ENCODE measurements at regions of chr12 and their contacts with region 1.

Region 1: GRCh38 chr12:55940065-55940732 is 9.2 kb downstream of the DGKA start:
- DNase-seq: peak; percentile 63 to 92 (median 82)
- ATAC-seq: peak; percentile 92
- H3K4me3 Mint-ChIP-seq: peak overlapping the region; percentile 47 to 98 (median 66)
- H3K27ac Mint-ChIP-seq: peak overlapping the region; percentile 79 to 99 (median 95)
- H3K4me1 Mint-ChIP-seq: peaks cover 56 to 97% (median 81%) of the 10 kb centered on the region in 4 donors
- H3K27me3 Mint-ChIP-seq: no peaks in the 10 kb centered on the region

Region 2: DNA sequence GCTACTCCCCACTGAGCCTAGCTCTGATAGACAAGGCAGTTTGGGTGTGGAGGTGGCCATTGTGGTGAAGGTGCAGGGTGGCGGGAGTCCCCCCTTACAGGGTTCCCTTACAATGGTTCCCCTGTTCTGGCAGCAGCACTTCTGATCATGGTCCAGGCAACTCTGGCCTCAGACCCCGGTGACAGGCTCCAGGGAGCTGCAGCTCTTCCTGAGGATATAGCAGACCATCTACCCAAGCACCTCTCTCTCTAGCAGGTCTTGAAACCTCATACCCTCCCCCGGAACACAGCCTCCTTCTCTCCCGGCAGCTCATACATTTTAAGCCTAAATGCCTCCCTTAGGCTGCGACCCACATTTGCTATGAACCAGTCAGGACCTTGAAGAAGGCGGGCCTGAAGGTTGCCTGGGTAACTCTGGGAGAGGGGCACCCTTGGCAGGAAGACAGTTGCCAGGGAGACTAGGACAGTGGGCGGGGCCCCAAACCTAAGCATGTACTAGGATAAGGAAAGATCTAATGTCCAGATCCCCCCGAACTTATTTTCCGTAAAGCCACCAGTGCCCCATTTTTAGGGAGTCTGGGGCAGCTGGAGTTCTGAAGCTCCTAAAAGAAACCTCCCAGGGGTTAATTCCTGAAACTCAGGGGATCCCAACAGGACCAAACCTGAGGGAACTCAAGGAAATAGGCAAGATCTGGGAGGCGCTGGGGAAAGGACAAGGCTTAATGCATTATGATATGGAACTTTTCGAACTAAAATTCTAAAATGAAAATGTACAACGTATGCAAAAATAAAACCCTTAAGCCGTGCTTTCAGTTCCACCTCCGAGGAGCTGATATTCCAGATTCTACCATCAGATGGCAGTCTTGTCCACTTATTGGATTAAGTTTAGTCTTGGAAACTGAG is 201.8 kb before region 1 on chr12:
- POLR2A ChIA-PET with region 1: interaction called, 11 read pairs
- DNase-seq: peak; percentile 48 to 91 (median 80)
- ATAC-seq: peak; percentile 65 to 80
- H3K4me3 Mint-ChIP-seq: peak overlapping the region; percentile 82 to 95 (median 93)
- H3K27ac Mint-ChIP-seq: peak overlapping the region; percentile 77 to 98 (median 95)
- H3K4me1 Mint-ChIP-seq: peaks cover 16 to 32% (median 26%) of the 10 kb centered on the region in 4 donors
- H3K27me3 Mint-ChIP-seq: no peaks in the 10 kb centered on the region

Region 3: GRCh38 chr12:55817346-55818139 is 122.7 kb before region 1 on chr12 and contains the starts of genes ORMDL2 and SARNP:
- POLR2A ChIA-PET with region 1: interaction called, 62 read pairs
- DNase-seq: peak; percentile 85 to 99 (median 98)
- ATAC-seq: peak; percentile 92 to 93
- H3K4me3 Mint-ChIP-seq: peak within 1 kb of the TSS in 1 of 10 donors; percentile 77
- H3K27ac Mint-ChIP-seq: no peak within 1 kb of the TSS
- H3K4me1 Mint-ChIP-seq: peaks cover 10 to 51% (median 41%) of the 10 kb centered on the region in 4 donors
- H3K27me3 Mint-ChIP-seq: no peaks in the 10 kb centered on the region
- polyA plus RNA-seq, gene ORMDL2: 71.6 to 92.5 (median 90.3) TPM
- polyA plus RNA-seq, gene SARNP: 93.6 to 104 (median 94.0) TPM

Region 4: DNA sequence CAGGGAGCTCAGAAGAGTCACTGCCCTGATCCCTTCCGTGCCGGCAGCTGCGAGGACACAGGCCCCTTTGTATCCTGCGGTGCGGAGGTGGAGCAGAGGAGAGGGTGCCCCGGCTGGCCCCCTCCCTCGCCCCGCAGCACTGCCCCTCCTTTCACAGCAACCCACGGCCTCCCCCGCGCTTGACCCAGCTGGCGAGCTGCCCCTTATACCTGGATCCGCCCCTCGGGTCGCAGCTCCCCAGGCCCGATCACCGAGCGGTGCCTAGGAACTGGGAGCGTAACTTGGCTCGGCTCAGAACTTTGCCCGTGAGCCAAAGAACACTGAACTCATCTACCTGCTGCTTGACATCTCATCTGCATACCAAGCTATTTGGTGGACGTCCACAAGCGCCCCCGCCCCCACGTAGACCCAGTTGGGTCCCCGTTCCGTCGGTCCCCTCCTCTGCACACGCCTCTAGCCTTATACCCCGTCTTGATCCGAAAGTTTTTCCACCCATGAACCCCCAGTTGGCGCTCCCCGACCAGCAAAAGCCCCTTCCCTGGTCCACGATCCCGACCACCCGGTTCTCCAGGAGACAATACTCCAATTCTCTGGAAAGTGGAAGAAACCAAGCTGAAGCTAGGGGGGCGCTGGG is 110.1 kb before region 1 on chr12:
- POLR2A ChIA-PET with region 1: interaction called, 95 read pairs
- DNase-seq: peak; percentile 15 to 71 (median 42)
- ATAC-seq: peak; percentile 21 to 36
- H3K4me3 Mint-ChIP-seq: peak overlapping the region; percentile 94 to 99 (median 98)
- H3K27ac Mint-ChIP-seq: peak overlapping the region; percentile 85 to 99 (median 96)
- H3K4me1 Mint-ChIP-seq: peaks cover 37 to 63% (median 59%) of the 10 kb centered on the region in 4 donors
- H3K27me3 Mint-ChIP-seq: no peaks in the 10 kb centered on the region

Region 5: GRCh38 chr12:55955800-55956508 is 15.8 kb after region 1 on chr12:
- POLR2A ChIA-PET with region 1: interaction called, 22 read pairs
- DNase-seq: peak in 7 of 10 donors; percentile 11 to 79 (median 35)
- ATAC-seq: peak; percentile 71 to 81
- H3K4me3 Mint-ChIP-seq: no peak overlapping the region
- H3K27ac Mint-ChIP-seq: peak overlapping the region; percentile 56 to 87 (median 82)
- H3K4me1 Mint-ChIP-seq: peaks cover 16 to 43% (median 26%) of the 10 kb centered on the region in 4 donors
- H3K27me3 Mint-ChIP-seq: no peaks in the 10 kb centered on the region